ENCODE measurements at regions of chr5 and their contacts with region 1.

Region 1: GRCh38 chr5:14011089-14012004 is 66.9 kb upstream of the DNAH5 start:
- DNase-seq: peak; percentile 87

Region 2: GRCh38 chr5:13574574-13574973 is 436.8 kb before region 1 on chr5:
- intact Hi-C with region 1: no loop called
- DNase-seq: no peak

Region 3: DNA sequence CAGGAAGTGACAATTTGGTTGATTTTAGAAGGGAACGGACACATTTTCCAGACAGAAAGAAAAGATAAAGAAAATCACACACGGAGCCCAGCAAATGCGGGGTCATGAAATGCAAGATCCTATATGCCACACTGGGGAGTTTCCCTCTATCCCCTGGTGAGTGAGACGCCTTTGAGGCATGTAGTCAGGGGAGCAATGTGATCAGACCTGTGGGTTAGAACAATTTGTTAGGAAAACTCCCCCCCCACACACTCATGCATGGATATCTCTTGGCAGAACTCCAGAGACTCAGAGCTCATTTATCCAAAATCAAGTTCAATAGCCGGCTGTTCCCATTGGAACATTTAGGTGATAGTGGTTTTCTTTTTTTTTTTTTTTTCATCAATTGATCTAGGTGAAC is 60.1 kb after region 1 on chr5:
- intact Hi-C with region 1: no loop called
- DNase-seq: no peak

Region 4: DNA sequence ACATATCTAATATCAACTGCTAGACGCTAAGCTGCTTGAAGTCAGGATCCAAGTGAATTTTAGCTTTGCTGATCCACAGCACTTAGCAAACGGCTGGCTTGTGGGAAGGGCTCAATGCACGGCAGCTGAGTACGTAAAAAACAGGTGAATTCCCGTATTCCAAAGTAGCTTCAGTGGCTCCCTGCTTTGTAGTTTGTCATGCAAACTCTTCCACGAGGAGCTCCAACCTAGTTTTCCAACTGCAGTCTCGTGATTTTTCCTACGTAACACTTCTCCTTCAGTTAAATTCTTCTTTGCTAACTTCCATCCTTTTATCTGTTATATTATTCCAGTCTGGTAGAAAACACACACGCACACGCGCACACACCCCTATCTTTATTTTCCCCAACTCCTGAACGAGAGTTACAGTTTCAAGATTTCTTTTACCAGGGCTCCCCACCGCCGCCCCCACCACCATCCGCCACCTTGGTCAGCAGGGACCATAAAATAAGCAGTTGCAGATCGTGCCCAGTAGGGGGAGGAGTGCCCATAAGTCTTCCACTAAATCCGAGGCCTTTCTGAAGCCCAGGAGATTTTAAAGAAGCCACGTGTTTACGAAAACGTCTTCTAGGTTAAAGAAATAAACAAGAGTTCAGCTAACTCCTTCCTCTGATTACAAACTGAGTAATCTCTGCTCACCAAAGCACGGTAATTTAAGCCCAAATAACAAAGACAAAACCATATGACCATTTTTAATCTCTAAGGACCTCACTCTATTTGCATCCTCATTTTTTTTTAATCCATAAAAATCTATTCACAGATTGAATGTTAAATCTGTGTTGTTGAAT is 97.0 kb after region 1 on chr5:
- intact Hi-C with region 1: loop called (anchors 5 kb)
- DNase-seq: no peak